Prostate gland (tissue), 2 donors: ENCODE measurements at regions of chr7 and their contacts with region 1.

Region 1: DNA sequence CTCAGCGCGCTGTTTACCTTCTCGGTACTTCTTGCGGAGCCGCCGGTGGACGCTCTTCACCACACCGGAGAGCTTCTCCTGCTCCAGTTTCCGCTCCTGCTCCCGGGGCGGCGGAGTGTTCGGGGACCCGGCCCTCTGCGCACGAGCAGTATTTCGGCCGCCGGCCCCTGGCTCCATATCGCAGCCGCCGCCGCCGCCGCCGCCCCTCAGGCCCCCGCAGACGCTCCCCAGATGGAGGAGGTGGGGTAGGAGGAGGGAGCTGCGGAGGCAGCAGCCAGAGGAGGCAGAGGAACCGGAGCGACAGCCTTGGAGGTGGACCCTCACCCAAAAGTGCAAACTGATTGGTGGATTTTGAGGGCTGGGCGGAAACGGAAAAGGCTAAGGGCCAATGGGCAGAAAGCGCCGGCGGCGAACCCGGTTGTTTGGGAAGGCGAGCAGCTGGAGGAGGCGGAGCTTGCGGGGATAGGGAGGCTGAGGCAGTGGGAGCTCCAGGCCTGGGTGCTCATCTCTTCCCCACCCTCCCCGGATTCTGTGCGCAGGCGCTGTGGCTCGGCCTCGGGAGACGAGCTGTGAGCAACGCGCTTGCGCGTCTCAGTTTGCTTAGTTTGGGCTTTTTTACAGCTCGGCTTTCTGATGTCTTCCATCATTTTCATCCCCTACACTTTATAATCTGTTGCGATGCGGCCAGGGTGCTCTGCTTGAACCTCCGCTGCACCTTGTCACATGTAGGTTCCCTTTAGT is 146.9 kb downstream of the GPR85 start:
- DNase-seq: peak; percentile 99
- H3K4me3 ChIP-seq: peak overlapping the region; percentile 83 to 86
- H3K27ac ChIP-seq: peak overlapping the region; percentile 78 to 80
- H3K4me1 ChIP-seq: peaks cover 3% of the 10 kb centered on the region
- H3K27me3 ChIP-seq: no peaks in the 10 kb centered on the region
- CTCF ChIP-seq: peak in 1 of 4 experiments; percentile 7
- POLR2A ChIP-seq: peak; percentile 58

Region 2: DNA sequence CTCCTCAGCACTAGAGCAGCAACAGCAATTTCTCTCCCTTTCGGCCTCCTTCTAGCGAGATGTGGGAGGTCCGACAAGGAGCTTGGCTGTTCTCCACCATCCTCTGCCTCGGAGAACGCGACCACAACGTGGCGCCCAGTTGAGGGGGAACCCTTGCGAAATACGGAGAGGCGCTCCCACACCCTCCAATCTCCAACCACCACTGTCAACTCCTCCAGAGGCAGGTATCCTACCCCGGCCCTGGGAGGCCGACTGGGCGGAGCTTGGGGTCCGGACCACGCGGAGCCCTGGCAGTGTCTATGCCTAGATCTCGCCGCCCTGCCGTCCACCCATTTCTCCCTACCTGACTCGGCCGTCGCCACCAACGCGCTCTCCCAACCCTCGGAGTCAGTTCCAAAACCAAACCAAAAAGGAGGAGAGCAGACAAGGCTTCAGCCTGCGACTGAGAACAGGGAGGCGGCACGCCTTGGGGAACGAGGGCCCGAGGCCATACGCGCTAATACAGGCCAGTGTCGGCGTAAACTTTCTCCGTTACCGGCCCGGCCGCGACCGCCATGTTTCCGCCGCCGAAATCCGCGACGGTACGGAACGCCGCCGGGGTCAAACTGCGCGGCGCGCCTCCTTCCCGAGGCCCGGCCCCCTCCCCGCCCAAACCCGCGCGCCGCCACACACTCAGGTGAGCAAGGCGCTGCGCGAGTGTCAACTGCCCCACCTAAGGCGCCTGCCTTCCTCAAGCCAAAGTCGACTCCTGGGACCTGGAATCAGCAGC is 149.7 kb before region 1 on chr7 and contains the start of gene TMEM168:
- intact Hi-C with region 1: loop called (anchors 5 kb)
- DNase-seq: peak; percentile 76
- H3K4me3 ChIP-seq: peak within 1 kb of the TSS; percentile 65 to 72
- H3K27ac ChIP-seq: peak within 1 kb of the TSS; percentile 81 to 89
- H3K4me1 ChIP-seq: no peaks in the 10 kb centered on the region
- H3K27me3 ChIP-seq: no peaks in the 10 kb centered on the region
- CTCF ChIP-seq: no peak
- POLR2A ChIP-seq: peak; percentile 54
- total RNA-seq, gene TMEM168: 20.5 to 27.0 TPM

Region 3: DNA sequence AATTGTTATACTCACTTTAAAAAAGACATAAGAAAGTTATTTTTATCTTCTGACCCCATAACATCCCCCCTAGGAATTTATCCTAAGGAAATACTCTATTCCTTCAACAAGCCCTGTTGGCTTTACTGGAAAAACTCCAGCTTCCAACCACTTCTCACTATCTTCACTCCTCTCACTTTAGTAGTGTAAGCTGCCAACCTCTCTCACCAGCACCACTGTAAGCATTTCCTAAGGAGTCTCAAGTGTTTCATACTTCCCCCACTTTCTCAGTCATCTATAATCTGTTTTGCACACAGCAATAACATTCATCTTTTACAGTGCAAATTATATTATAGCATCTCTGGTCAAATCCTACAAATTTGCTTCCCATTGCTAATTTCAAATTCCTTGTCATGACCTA is 101.1 kb after region 1 on chr7:
- intact Hi-C with region 1: no loop called
- DNase-seq: no peak
- H3K4me3 ChIP-seq: no peak overlapping the region
- H3K27ac ChIP-seq: no peak overlapping the region
- H3K4me1 ChIP-seq: no peaks in the 10 kb centered on the region
- H3K27me3 ChIP-seq: no peaks in the 10 kb centered on the region
- CTCF ChIP-seq: no peak
- POLR2A ChIP-seq: no peak

Region 4: GRCh38 chr7:113118074-113118959 is 178.6 kb after region 1 on chr7 and contains the start of gene SMIM30:
- intact Hi-C with region 1: loop called (anchors 5 kb)
- DNase-seq: peak; percentile 94
- H3K4me3 ChIP-seq: peak within 1 kb of the TSS; percentile 40 to 49
- H3K27ac ChIP-seq: peak within 1 kb of the TSS; percentile 31 to 52
- H3K4me1 ChIP-seq: no peaks in the 10 kb centered on the region
- H3K27me3 ChIP-seq: no peaks in the 10 kb centered on the region
- CTCF ChIP-seq: no peak
- POLR2A ChIP-seq: peak; percentile 86
- total RNA-seq, gene SMIM30: 28.2 to 47.4 TPM